Right cardiac atrium (tissue), 5 donors: ENCODE measurements at regions of chr3 and their contacts with region 1.

Region 1: GRCh38 chr3:13879655-13880204 is at the start of gene WNT7A:
- DNase-seq: peak in 2 of 3 donors; percentile 58 to 59
- ATAC-seq: no peak
- H3K4me3 ChIP-seq: peak within 1 kb of the TSS; percentile 3
- H3K27ac ChIP-seq: no peak within 1 kb of the TSS
- H3K4me1 ChIP-seq: peaks cover 2% of the 10 kb centered on the region
- H3K27me3 ChIP-seq: no peaks in the 10 kb centered on the region
- total RNA-seq, gene WNT7A: not detected

Region 2: GRCh38 chr3:13657660-13658435 is 221.9 kb before region 1 on chr3:
- intact Hi-C with region 1: loop called in 2 of 4 experiments (anchors 2 to 10 kb)
- DNase-seq: peak in 2 of 3 donors; percentile 77 to 83
- ATAC-seq: peak; percentile 73 to 74
- H3K4me3 ChIP-seq: no peak overlapping the region
- H3K27ac ChIP-seq: no peak overlapping the region
- H3K4me1 ChIP-seq: no peaks in the 10 kb centered on the region
- H3K27me3 ChIP-seq: no peaks in the 10 kb centered on the region